Heart left ventricle (tissue), 16 donors: ENCODE measurements at regions of chr1 and their contacts with region 1.

Region 1: DNA sequence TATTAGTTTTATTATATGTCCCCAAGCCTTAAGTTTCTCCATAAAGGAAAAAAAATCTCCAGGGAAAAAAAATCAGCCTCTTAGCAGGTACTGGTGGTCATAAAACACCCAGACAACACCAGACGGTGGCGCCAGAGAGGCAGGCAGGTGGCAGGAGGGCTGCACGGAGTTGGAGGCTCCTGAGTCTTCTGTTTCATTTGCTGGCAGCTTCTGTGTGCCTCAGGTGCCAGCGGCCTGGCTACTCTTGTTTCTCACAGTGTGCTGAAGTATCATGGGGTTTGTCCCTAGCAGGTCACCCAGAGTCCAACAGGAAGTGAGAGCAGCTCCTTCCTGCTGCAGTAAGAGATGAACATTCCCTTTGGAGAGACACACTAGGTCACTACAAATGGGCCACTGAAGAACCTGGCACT is 123.3 kb upstream of the GADD45A start:
- DNase-seq: peak; percentile 88 to 94 (median 92)
- ATAC-seq: peak; percentile 49 to 81 (median 78)
- H3K4me3 ChIP-seq: no peak overlapping the region
- H3K27ac ChIP-seq: peak overlapping the region in 9 of 12 donors; percentile 8 to 55 (median 28)
- H3K4me1 ChIP-seq: peaks cover 0 to 33% (median 19%) of the 10 kb centered on the region in 12 donors
- H3K27me3 ChIP-seq: no peaks in the 10 kb centered on the region
- CTCF ChIP-seq: peak; percentile 78 to 90 (median 86)
- POLR2A ChIP-seq: no peak

Region 2: DNA sequence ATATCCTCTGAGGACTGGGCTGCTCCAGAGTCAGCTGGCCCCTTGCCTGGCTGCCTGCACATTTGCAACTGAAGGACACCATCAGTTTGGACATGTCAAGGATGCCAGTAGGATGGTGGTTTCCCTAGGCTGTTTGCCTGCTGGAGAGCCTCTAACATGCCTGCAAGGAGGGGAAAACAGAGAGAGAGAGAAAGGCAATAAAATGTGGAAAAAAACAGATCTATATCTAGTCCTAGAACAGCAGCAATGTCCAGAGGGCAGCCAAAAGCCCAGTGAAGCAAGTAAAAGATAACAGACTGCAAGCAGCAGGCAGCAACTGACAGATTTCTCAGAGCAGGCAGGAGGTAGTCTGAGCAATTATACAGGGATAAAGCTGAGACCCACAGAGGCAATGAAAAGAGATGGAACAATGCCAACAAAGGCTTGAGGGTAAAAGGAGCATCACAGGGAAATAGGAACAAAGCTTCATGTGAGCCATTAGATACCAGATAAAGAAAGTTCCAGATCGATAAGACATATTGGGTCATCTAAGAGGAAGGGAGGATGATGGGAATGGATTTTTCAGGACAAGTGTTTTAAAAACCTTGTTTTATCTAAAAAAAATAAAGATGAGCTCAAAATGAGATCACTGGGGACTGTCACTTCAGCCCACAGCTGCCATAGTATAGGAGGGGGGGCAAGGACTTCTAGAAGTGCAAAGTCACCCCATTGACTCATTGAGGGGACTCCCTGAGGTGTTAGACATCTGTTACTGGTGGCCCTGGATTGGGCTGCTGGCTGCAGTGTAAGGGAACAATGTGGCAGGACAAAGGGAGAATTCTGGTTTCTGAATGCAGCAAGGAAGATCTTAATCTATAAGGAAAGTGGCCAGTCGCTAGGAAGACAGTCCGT is 84.7 kb after region 1 on chr1:
- intact Hi-C with region 1: loop called in 1 of 10 experiments (anchors 10 kb)
- DNase-seq: peak in 4 of 5 donors; percentile 34 to 74 (median 42)
- ATAC-seq: peak; percentile 57 to 75 (median 64)
- H3K4me3 ChIP-seq: no peak overlapping the region
- H3K27ac ChIP-seq: peak overlapping the region in 11 of 12 donors; percentile 23 to 61 (median 53)
- H3K4me1 ChIP-seq: peaks cover 6 to 31% (median 21%) of the 10 kb centered on the region in 12 donors
- H3K27me3 ChIP-seq: no peaks in the 10 kb centered on the region
- CTCF ChIP-seq: no peak
- POLR2A ChIP-seq: no peak

Region 3: DNA sequence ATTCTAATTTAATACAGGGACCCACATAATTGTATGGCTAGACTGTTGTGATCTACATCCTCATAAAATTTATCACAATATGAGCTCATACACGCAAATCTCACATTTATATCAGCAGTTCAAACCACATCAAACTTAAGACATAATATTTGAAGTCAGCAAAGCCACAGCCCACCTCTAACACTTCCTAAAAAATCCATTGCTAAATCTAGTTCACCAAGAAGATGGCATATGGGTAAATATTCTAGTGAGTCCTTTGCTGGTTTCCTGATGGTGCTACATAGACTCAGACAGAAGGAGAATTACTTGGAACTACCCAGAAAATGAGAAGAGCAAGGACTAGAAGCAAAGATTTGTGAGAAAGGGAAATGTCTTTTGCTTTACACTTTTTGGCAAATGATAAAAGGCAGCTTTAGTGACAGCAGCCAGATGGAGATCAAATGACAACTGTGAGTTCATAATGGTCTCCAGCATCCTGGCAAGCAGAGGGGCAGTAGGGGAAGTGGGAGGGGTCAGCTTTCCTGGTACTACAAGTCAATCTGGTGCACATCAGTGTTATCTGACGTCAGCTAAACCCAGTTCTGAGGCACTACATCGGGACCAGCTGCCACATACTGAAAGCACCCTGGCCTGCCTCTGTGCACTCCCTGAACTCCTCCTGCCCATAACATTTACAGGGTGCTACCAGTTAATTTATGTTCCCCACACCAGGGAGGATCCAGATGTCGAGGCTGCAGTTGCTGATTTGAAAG is 112.7 kb after region 1 on chr1:
- intact Hi-C with region 1: loop called in 1 of 10 experiments (anchors 10 kb)
- DNase-seq: peak in 4 of 5 donors; percentile 36 to 60 (median 42)
- ATAC-seq: peak; percentile 61 to 96 (median 70)
- H3K4me3 ChIP-seq: no peak overlapping the region
- H3K27ac ChIP-seq: peak overlapping the region in 9 of 12 donors; percentile 5 to 49 (median 31)
- H3K4me1 ChIP-seq: peaks cover 0 to 17% (median 10%) of the 10 kb centered on the region in 12 donors
- H3K27me3 ChIP-seq: no peaks in the 10 kb centered on the region
- CTCF ChIP-seq: no peak
- POLR2A ChIP-seq: no peak

Region 4: DNA sequence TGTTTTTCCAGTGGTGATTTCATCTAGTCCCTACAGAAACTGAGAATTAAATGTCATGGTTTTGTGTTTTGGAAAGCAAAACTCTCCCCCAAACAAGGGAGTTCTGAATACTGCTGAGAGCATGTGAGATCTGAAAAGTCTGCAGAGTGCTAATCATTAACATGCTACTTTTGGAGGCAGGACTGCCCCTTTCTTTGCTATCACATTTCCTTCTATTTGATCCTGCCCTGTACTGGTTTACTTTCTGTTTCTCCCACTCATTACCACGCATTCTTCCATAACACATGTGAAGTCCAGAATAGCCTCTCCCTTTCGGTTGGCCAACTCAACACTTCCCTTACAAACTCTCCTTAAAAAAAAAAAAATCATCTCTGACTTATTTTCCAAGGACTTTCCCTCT is 186.9 kb after region 1 on chr1:
- intact Hi-C with region 1: loop called in 1 of 10 experiments (anchors 10 kb)
- DNase-seq: no peak
- ATAC-seq: peak; percentile 20 to 80 (median 73)
- H3K4me3 ChIP-seq: peak overlapping the region in 7 of 12 donors; percentile 5 to 35 (median 22)
- H3K27ac ChIP-seq: peak overlapping the region in 11 of 12 donors; percentile 1 to 80 (median 62)
- H3K4me1 ChIP-seq: peaks cover 0 to 68% (median 39%) of the 10 kb centered on the region in 12 donors
- H3K27me3 ChIP-seq: no peaks in the 10 kb centered on the region
- CTCF ChIP-seq: no peak
- POLR2A ChIP-seq: no peak

Region 5: DNA sequence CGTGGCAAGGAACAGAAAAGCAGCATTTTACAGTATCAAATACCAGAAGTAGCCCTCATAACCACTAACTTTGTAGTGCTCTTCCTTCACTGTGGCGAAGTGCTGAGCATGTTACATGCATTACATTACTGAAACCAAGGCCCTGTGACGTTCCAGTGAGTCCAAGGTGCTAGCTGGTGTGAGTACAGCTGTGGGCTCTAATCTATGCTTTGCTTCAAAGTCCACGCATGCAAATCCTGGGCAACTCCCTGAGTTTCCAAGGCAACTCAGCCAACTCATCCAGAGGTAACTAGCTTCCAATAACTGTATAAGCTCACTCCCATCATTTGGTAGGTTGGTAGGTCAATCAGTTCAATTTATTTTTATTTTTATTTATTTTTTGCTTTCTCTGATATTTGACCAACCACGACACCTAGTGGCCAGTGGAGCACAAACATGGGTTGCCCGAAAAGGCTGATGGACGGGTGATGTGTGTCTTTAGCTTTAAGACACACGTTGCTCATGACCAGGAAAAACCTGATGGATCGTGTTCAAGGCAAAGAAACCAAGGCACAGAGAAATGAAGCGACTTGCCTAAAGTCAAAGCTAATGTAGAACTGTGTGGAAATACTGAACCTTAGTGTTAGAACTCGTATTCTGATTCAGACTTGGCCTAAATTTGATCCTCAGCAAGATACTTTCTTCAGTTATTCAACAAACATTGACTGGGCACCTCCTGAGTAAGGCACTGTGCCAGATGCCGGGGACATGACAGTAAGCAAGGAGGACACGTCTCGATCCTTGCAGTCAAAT is 198.5 kb after region 1 on chr1:
- intact Hi-C with region 1: loop called (anchors 1 to 10 kb)
- DNase-seq: peak in 4 of 5 donors; percentile 38 to 61 (median 45)
- ATAC-seq: peak; percentile 59 to 77 (median 68)
- H3K4me3 ChIP-seq: no peak overlapping the region
- H3K27ac ChIP-seq: peak overlapping the region in 7 of 12 donors; percentile 5 to 34 (median 21)
- H3K4me1 ChIP-seq: peaks cover 0 to 32% (median 16%) of the 10 kb centered on the region in 12 donors
- H3K27me3 ChIP-seq: no peaks in the 10 kb centered on the region
- CTCF ChIP-seq: peak; percentile 83 to 95 (median 90)
- POLR2A ChIP-seq: no peak

Region 6: GRCh38 chr1:67832737-67833601 is 271.3 kb after region 1 on chr1 and contains the start of gene GNG12:
- intact Hi-C with region 1: loop called in 1 of 10 experiments (anchors 10 kb)
- DNase-seq: peak; percentile 71 to 85 (median 76)
- ATAC-seq: peak; percentile 53 to 93 (median 80)
- H3K4me3 ChIP-seq: peak within 1 kb of the TSS; percentile 66 to 93 (median 86)
- H3K27ac ChIP-seq: peak within 1 kb of the TSS; percentile 37 to 86 (median 82)
- H3K4me1 ChIP-seq: peaks cover 0 to 26% (median 5%) of the 10 kb centered on the region in 12 donors
- H3K27me3 ChIP-seq: peaks cover 0 to 44% (median 0%) of the 10 kb centered on the region in 9 donors
- CTCF ChIP-seq: no peak
- POLR2A ChIP-seq: peak in 1 of 2 donors; percentile 25
- total RNA-seq, gene GNG12: 27.2 to 80.2 (median 44.6) TPM

Region 7: DNA sequence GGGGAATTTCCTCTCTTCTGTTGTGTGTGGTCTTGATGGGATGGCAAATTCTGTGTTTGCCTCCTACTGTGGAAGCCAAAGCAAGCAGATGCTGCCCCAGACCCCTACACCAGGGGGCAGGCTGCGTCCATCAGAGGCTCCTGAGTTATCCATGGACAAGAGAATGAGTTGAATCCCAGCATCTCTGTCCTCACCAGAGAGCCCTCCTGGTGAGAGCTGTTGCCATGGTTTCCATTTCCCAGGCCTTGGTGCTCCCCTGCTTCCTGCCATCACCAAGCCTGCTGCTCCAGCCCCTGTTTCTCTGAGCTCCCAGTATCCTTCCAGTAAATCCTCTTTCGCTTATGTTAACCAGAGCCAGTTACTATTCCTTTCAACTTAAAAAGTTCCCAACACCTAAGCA is 292.0 kb after region 1 on chr1:
- intact Hi-C with region 1: no loop called
- DNase-seq: peak; percentile 38 to 75 (median 47)
- ATAC-seq: peak; percentile 56 to 85 (median 76)
- H3K4me3 ChIP-seq: no peak overlapping the region
- H3K27ac ChIP-seq: no peak overlapping the region
- H3K4me1 ChIP-seq: peaks cover 0 to 15% (median 10%) of the 10 kb centered on the region in 12 donors
- H3K27me3 ChIP-seq: no peaks in the 10 kb centered on the region
- CTCF ChIP-seq: peak; percentile 53 to 80 (median 70)
- POLR2A ChIP-seq: no peak